CD8-positive, alpha-beta T cell (primary cell): ENCODE measurements at regions of chrX and their contacts with region 1.

Region 1: DNA sequence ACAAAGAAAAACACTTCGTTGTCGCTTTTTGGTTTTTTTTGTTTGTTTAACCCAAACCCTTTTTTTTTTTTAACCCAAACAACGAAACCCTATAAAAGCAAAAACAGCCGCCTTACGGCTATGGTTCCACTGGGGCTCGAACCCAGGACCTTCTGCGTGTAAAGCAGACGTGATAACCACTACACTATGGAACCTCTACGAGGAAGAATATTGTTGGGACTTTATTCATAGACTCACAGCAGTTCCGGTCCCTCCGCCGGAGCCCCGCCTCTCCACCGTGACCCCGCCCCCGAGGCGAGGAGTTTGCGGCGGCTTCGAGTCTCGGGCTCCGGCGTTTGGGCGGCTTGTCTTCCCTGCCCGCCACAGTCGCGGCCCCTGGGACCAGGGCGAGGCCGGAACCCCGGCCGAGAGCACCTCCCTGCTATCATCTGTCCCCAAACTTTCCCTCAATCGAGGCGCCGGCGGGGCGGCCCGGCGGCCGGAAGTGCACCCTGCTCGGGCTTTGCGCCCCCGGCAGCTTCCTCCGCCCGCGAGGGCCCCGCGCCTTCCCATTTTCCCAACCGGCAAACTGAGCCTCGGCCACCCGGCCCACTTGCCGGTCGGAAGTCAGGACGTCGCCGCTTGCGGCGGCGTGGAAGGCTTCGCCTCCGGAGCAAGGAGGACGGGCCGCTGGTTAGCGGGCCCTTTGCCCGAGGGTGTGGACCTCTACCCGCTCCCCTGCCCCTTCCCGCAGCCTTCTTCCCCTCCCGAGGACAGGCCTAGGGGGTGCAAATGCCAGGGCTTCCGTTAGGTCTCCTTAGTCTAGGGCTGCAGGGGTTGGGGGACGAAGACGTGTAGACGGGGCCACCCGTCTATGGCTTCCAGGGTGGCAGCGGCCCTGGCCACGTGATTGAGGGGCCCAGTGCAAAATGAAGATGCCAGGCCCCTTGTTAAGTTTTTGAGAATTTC is 3.2 kb upstream of the RS1 start:
- DNase-seq: peak; percentile 66 to 88 (median 73)
- ATAC-seq: peak; percentile 90
- H3K4me3 ChIP-seq: peak overlapping the region; percentile 70 to 76
- H3K4me3 Mint-ChIP-seq: peak overlapping the region; percentile 81
- H3K27ac ChIP-seq: peak overlapping the region; percentile 76 to 84
- H3K27ac Mint-ChIP-seq: peak overlapping the region; percentile 89
- H3K4me1 ChIP-seq: no peaks in the 10 kb centered on the region
- H3K4me1 Mint-ChIP-seq: peaks cover 11% of the 10 kb centered on the region
- H3K27me3 ChIP-seq: no peaks in the 10 kb centered on the region
- H3K27me3 Mint-ChIP-seq: no peaks in the 10 kb centered on the region
- CTCF ChIP-seq: no peak

Region 2: DNA sequence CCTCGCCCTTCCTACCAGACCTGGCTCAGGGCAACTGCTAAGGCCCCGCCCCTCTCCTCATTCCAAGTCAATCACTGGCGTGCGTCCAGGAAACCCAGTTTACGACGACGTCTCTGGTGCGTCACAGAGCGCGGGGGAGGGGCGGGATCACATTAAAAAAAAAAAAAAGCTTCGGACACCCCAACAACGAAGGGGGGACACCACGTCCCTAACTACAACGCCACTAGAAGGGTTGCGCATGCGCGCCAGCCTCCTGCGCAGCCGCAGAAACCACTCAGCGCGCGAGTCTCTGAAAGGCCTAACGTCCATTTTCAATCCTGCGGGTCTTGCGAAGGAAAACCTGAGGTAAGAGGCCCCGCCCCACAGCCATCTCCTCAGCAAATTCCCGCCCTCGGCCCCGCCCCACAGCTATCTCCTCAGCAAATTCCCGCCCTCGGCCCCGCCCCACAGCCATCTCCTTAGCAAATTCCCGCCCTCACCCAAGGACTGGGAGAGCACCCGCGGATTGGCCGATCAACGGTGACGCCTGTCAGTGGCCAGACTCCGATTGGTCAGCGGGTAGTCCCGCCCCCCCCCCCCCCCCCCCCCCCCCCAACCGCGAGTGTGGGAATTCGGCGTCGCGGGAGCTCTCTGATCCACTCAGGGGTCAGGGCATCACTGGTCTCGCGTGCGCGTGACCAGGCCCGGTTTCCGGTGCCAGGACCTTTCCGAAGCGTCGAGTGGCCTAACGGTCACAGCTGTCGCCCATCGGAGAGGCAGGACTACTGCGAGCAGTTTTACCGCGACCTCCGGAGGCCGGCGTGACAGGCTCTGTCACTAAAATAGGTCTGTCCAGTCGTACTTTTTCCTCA is 938.0 kb before region 1 on chrX and contains the start of gene SCML1:
- CTCF ChIA-PET with region 1: no interaction called
- POLR2A ChIA-PET with region 1: no interaction called
- intact Hi-C with region 1: loop called (anchors 2 to 5 kb)
- DNase-seq: peak; percentile 64 to 90 (median 86)
- ATAC-seq: peak; percentile 62
- H3K4me3 ChIP-seq: peak within 1 kb of the TSS; percentile 51 to 92
- H3K4me3 Mint-ChIP-seq: peak within 1 kb of the TSS; percentile 87
- H3K27ac ChIP-seq: peak within 1 kb of the TSS; percentile 88 to 95
- H3K27ac Mint-ChIP-seq: peak within 1 kb of the TSS; percentile 91
- H3K4me1 ChIP-seq: peaks cover 9% of the 10 kb centered on the region
- H3K4me1 Mint-ChIP-seq: peaks cover 35% of the 10 kb centered on the region
- H3K27me3 ChIP-seq: no peaks in the 10 kb centered on the region
- H3K27me3 Mint-ChIP-seq: no peaks in the 10 kb centered on the region
- CTCF ChIP-seq: no peak
- total RNA-seq, gene SCML1: 50.6 to 52.2 TPM

Region 3: DNA sequence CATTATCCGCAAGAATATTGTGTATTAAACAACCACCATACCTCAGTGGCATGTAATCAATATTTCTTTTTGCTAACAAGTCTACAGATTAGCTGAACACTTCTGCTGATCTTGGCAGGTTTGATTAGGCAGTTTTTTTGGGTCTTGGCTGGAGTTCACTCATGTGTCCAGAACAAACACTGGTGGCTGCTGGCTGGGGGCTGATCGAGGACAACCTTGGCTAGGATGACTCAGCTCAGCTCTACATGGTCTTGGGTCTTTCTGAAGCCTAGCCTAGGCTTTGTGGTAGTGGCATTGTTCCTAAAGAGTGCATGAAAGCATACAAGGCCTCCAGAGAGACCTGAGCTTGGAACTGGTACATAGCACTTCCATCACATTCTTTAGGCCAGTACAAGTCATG is 73.4 kb after region 1 on chrX:
- CTCF ChIA-PET with region 1: no interaction called
- POLR2A ChIA-PET with region 1: no interaction called
- intact Hi-C with region 1: no loop called
- DNase-seq: no peak
- ATAC-seq: no peak
- H3K4me3 ChIP-seq: no peak overlapping the region
- H3K4me3 Mint-ChIP-seq: no peak overlapping the region
- H3K27ac ChIP-seq: no peak overlapping the region
- H3K27ac Mint-ChIP-seq: no peak overlapping the region
- H3K4me1 ChIP-seq: no peaks in the 10 kb centered on the region
- H3K4me1 Mint-ChIP-seq: no peaks in the 10 kb centered on the region
- H3K27me3 ChIP-seq: no peaks in the 10 kb centered on the region
- H3K27me3 Mint-ChIP-seq: no peaks in the 10 kb centered on the region
- CTCF ChIP-seq: no peak

Region 4: DNA sequence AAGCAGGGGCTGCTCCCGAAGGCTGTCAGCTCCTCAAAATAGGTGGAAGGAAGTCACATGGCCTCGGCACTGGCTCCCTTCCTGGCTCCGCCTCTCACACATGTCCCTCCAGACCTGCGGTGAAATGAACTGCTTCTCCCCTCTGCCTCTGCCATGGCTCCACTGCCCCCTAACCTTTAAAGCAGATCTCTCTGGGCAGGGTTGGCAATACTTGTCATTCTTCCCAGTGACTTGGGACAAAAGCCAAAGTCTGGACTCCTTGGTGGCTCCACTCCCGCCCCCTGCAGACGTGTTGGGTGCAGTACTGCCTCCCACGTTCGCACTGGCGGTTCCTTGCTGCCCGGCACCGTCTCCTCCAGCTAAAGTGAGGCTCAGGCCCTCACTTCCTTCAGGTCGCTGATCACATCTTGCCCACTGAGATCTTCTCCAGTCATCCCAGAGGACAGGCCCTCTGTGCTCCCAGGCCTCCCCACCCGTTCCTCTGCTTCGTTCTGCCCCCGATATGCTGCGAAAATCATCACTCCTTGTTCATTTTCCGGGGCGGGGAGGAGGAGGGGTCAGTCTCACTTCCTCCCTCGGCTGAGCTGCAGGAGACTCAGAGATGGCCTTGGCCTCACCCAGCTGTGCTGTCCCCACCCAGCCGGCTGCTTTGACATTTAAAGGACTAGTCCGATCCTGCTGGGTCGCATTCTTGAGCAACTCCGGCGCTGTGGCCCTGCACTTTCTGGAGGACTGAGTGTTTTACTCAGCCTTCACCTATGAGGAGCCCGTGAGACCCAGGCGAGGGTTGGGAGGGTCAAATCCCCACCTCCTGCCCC is 211.5 kb after region 1 on chrX:
- CTCF ChIA-PET with region 1: no interaction called
- POLR2A ChIA-PET with region 1: no interaction called
- intact Hi-C with region 1: loop called (anchors 2 to 5 kb)
- DNase-seq: peak; percentile 2 to 67 (median 31)
- ATAC-seq: peak; percentile 47
- H3K4me3 ChIP-seq: peak overlapping the region; percentile 58 to 64
- H3K4me3 Mint-ChIP-seq: peak overlapping the region; percentile 88
- H3K27ac ChIP-seq: peak overlapping the region; percentile 14 to 69
- H3K27ac Mint-ChIP-seq: peak overlapping the region; percentile 91
- H3K4me1 ChIP-seq: peaks cover 27% of the 10 kb centered on the region
- H3K4me1 Mint-ChIP-seq: peaks cover 33% of the 10 kb centered on the region
- H3K27me3 ChIP-seq: no peaks in the 10 kb centered on the region
- H3K27me3 Mint-ChIP-seq: no peaks in the 10 kb centered on the region
- CTCF ChIP-seq: peak; percentile 33

Region 5: GRCh38 chrX:19334945-19335626 is 660.0 kb after region 1 on chrX:
- CTCF ChIA-PET with region 1: no interaction called
- POLR2A ChIA-PET with region 1: no interaction called
- intact Hi-C with region 1: loop called (anchors 2 kb)
- DNase-seq: peak in 3 of 9 experiments; percentile 21 to 53 (median 39)
- ATAC-seq: peak; percentile 21
- H3K4me3 ChIP-seq: no peak overlapping the region
- H3K4me3 Mint-ChIP-seq: no peak overlapping the region
- H3K27ac ChIP-seq: no peak overlapping the region
- H3K27ac Mint-ChIP-seq: no peak overlapping the region
- H3K4me1 ChIP-seq: no peaks in the 10 kb centered on the region
- H3K4me1 Mint-ChIP-seq: no peaks in the 10 kb centered on the region
- H3K27me3 ChIP-seq: no peaks in the 10 kb centered on the region
- H3K27me3 Mint-ChIP-seq: no peaks in the 10 kb centered on the region
- CTCF ChIP-seq: no peak

Region 6: GRCh38 chrX:19343535-19344408 is 668.7 kb after region 1 on chrX and contains the start of gene PDHA1:
- CTCF ChIA-PET with region 1: no interaction called
- POLR2A ChIA-PET with region 1: no interaction called
- intact Hi-C with region 1: loop called in 1 of 2 experiments (anchors 1 kb)
- DNase-seq: peak; percentile 83 to 96 (median 92)
- ATAC-seq: peak; percentile 97
- H3K4me3 ChIP-seq: peak within 1 kb of the TSS; percentile 62 to 71
- H3K4me3 Mint-ChIP-seq: peak within 1 kb of the TSS; percentile 86
- H3K27ac ChIP-seq: peak within 1 kb of the TSS; percentile 77 to 82
- H3K27ac Mint-ChIP-seq: peak within 1 kb of the TSS; percentile 92
- H3K4me1 ChIP-seq: peaks cover 15% of the 10 kb centered on the region
- H3K4me1 Mint-ChIP-seq: peaks cover 23% of the 10 kb centered on the region
- H3K27me3 ChIP-seq: no peaks in the 10 kb centered on the region
- H3K27me3 Mint-ChIP-seq: no peaks in the 10 kb centered on the region
- CTCF ChIP-seq: no peak
- total RNA-seq, gene PDHA1: 107 to 115 TPM